AG04450 (cell line): ENCODE measurements at regions of chr14 and their contacts with region 1.

Region 1: GRCh38 chr14:93939304-93940229 is 12.4 kb downstream of the FAM181A start:
- DNase-seq: peak; percentile 29
- H3K4me3 ChIP-seq: peak overlapping the region; percentile 45
- H3K27ac ChIP-seq: no peak overlapping the region
- H3K27me3 ChIP-seq: peaks cover 9% of the 10 kb centered on the region
- CTCF ChIP-seq: peak; percentile 63

Region 2: DNA sequence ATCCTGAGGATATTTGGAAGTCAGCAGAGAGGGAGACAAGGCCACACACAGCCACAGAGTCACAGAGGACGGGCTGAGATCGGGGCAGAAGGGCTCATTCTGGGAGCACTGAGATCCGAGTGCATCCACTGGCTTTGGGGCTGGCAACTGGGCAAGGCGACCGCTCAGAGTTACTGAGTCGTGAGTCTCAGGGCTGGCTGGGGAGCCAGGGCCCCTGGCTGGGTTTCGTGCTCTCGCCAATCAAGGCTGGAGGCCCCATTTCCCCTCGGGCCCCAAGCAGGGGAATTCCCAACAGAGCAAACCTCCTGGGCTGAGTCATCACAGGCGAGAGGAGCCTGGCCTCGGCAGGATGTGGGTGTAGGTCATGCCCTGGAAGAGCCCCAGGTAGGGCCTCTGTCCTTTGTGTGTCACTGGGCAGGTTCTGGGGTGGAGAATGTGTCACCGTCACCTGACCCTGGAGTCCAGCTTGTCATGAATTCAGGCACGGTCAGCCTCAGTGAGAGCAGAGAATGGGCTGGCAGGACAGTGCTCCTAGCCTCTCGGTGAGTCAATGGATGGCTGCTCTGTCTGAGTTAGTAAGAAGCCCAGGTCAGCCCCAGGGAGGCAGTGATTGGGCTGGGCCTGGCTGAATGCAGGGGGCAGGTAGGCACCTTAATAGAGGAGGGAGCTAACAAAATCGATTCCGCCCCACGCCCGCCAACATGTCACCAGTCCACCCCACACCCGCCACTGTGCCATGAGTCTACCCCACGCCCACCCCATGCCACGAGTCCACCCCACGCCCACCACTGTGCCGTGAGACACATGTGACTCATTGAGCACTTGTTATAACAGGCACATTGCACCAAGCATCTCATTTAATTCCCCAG is 19.9 kb after region 1 on chr14:
- CTCF ChIA-PET with region 1: interaction called, 17 read pairs
- POLR2A ChIA-PET with region 1: no interaction called
- DNase-seq: peak; percentile 73
- H3K4me3 ChIP-seq: no peak overlapping the region
- H3K27ac ChIP-seq: peak overlapping the region; percentile 82
- H3K27me3 ChIP-seq: no peaks in the 10 kb centered on the region
- CTCF ChIP-seq: no peak

Region 3: DNA sequence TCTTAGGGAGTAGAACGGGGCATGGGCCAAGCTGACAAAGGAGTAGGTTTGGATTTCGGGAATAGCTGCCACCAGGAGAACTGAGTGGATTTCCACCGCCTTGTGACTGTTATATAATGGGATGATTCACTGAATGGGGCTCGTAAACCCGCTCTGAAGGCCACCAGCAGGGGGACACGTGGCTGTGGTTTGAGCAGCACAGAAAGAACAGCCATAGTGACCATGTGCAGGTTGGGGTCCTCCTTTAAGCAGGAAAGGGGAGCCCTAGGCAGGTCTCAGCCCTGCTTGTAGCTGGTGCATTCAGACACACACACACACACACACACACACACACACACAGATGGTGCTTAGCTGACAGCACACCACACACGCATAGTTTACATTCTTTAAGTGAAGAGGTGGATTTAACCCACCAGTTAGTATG is 45.4 kb after region 1 on chr14:
- CTCF ChIA-PET with region 1: interaction called, 35 read pairs
- POLR2A ChIA-PET with region 1: interaction called, 4 read pairs
- DNase-seq: peak; percentile 85
- H3K4me3 ChIP-seq: no peak overlapping the region
- H3K27ac ChIP-seq: peak overlapping the region; percentile 47
- H3K27me3 ChIP-seq: no peaks in the 10 kb centered on the region
- CTCF ChIP-seq: peak; percentile 47

Region 4: GRCh38 chr14:94001501-94002396 is 62.2 kb after region 1 on chr14:
- CTCF ChIA-PET with region 1: interaction called, 270 read pairs
- POLR2A ChIA-PET with region 1: no interaction called
- DNase-seq: peak; percentile 41
- H3K4me3 ChIP-seq: no peak overlapping the region
- H3K27ac ChIP-seq: no peak overlapping the region
- H3K27me3 ChIP-seq: peaks cover 17% of the 10 kb centered on the region
- CTCF ChIP-seq: peak; percentile 97

Region 5: GRCh38 chr14:94036313-94037050 is 96.9 kb after region 1 on chr14:
- CTCF ChIA-PET with region 1: interaction called, 30 read pairs
- POLR2A ChIA-PET with region 1: interaction called, 8 read pairs
- DNase-seq: peak; percentile 34
- H3K4me3 ChIP-seq: no peak overlapping the region
- H3K27ac ChIP-seq: no peak overlapping the region
- H3K27me3 ChIP-seq: no peaks in the 10 kb centered on the region
- CTCF ChIP-seq: peak; percentile 84

Region 6: GRCh38 chr14:94129111-94129757 is 189.7 kb after region 1 on chr14 and contains the start of gene IFI27L2:
- CTCF ChIA-PET with region 1: interaction called, 43 read pairs
- POLR2A ChIA-PET with region 1: no interaction called
- DNase-seq: peak; percentile 24
- H3K4me3 ChIP-seq: peak within 1 kb of the TSS; percentile 72
- H3K27ac ChIP-seq: peak within 1 kb of the TSS; percentile 54
- H3K27me3 ChIP-seq: peaks cover 3% of the 10 kb centered on the region
- CTCF ChIP-seq: peak; percentile 40
- polyA plus RNA-seq, gene IFI27L2: 81.9 and 122 TPM in 2 replicates

Region 7: DNA sequence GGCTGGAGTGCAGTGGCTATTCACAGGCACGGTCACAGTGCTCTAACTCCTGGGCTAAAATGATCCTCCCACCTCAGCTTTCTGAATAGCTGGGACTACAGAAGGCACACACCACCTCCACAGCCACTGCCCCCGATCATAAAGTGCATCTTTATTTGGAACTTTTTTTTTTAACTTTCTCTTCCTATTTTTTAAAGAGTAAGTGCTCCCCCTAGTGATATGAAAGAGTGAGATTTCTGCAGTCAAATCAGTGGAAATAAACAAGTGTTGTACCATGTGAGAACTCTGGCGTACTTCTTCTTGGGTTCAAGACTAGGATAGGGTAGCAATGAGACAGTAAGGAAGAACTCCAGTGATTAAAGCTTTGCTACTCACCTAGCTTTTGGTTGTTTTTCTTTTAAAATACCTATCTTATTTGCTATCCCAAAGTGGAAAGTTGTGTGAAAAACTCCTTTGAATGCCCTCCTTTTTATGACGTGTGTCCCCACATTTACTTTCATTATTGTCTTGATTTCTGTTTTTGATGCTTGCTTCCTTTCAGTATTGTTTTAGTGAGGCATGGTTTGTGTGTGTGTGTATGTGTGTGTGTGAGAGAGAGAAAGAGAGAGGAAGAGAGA is 241.2 kb after region 1 on chr14:
- CTCF ChIA-PET with region 1: interaction called, 16 read pairs
- POLR2A ChIA-PET with region 1: no interaction called
- DNase-seq: no peak
- H3K4me3 ChIP-seq: no peak overlapping the region
- H3K27ac ChIP-seq: no peak overlapping the region
- H3K27me3 ChIP-seq: peaks cover 11% of the 10 kb centered on the region
- CTCF ChIP-seq: peak; percentile 70